Heart left ventricle (tissue), 16 donors: ENCODE measurements at regions of chr3 and their contacts with region 1.

Region 1: DNA sequence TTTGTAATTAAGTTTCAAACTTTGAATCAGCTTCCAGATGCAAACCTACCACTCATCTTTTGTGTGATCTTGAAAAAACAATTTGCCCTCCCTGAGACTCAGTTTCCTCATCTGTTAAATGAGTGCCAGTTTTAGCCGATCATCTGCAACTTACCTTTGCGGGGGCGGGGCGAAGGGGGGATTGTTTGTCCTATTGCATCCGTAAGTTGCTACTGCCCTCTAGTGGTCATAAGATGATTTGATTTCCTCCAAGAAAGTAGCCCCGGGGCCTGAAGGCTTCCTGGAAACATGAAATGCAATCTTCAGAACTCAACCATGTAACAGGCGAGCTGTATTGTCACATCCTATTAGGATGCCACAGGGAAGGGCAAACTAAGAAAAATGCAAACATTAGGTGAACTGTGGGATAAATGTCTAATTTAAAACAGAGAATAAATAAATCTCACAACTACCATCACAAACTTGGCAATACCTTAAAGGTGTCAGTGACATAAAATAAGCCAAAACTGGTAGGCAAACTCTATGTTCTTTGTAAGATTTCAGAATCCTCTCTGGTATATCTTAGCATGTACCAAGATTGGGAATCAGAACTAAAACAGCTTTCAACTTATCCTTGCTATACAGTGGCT is 63.5 kb upstream of the CLDN18 start:
- DNase-seq: peak in 4 of 5 donors; percentile 17 to 42 (median 24)
- ATAC-seq: peak in 1 of 4 donors; percentile 29
- H3K4me3 ChIP-seq: no peak overlapping the region
- H3K27ac ChIP-seq: no peak overlapping the region
- H3K4me1 ChIP-seq: no peaks in the 10 kb centered on the region
- H3K27me3 ChIP-seq: no peaks in the 10 kb centered on the region
- CTCF ChIP-seq: peak; percentile 47 to 72 (median 64)
- POLR2A ChIP-seq: no peak

Region 2: DNA sequence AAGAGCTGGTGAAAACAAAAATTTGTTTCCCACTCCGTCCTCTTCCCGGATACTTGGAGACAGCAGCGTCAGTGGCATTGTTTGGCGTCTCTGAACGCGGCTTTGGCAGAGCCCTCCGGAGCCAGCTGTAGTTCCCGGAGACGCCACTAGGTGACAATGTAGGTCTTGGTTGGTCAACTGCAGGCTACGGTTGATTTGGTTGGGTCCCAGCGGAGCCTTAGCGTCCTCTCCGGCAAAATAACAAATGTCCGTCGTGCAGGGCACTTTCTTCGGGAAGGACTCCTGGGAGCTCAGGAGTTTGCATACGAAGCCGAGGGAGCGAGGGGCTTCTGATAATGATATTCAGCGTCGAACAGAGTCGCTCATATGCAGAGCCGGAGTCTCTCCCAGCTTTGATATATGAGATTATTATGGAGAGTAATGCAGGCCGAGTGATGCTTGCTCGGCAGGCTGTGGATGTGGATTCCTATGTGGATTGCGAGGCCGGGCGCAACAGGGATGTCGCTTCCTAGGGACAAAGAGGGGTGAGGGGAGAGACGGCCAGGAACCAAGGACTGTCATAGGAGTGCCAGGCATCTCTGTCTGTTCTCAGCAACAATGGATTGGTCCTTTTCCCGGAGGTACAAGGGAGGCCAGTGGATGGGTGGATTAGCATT is 913.9 kb before region 1 on chr3:
- intact Hi-C with region 1: loop called in 7 of 10 experiments (anchors 5 to 10 kb)
- DNase-seq: peak; percentile 81 to 90 (median 84)
- ATAC-seq: peak; percentile 74 to 94 (median 88)
- H3K4me3 ChIP-seq: peak overlapping the region in 10 of 12 donors; percentile 12 to 54 (median 41)
- H3K27ac ChIP-seq: no peak overlapping the region
- H3K4me1 ChIP-seq: peaks cover 0 to 12% (median 0%) of the 10 kb centered on the region in 12 donors
- H3K27me3 ChIP-seq: peaks cover 0 to 8% (median 3%) of the 10 kb centered on the region in 9 donors
- CTCF ChIP-seq: peak; percentile 96 to 99 (median 97)
- POLR2A ChIP-seq: no peak

Region 3: GRCh38 chr3:137110484-137110883 is 836.0 kb before region 1 on chr3:
- intact Hi-C with region 1: loop called (anchors 1 to 10 kb)
- DNase-seq: no peak
- ATAC-seq: no peak
- H3K4me3 ChIP-seq: no peak overlapping the region
- H3K27ac ChIP-seq: no peak overlapping the region
- H3K4me1 ChIP-seq: peaks cover 0 to 2% (median 0%) of the 10 kb centered on the region in 12 donors
- H3K27me3 ChIP-seq: peaks cover 0 to 25% (median 6%) of the 10 kb centered on the region in 9 donors
- CTCF ChIP-seq: peak; percentile 48 to 76 (median 64)
- POLR2A ChIP-seq: no peak